Mammary epithelial cell (primary cell): ENCODE measurements at regions of chr2 and their contacts with region 1.

Region 1: DNA sequence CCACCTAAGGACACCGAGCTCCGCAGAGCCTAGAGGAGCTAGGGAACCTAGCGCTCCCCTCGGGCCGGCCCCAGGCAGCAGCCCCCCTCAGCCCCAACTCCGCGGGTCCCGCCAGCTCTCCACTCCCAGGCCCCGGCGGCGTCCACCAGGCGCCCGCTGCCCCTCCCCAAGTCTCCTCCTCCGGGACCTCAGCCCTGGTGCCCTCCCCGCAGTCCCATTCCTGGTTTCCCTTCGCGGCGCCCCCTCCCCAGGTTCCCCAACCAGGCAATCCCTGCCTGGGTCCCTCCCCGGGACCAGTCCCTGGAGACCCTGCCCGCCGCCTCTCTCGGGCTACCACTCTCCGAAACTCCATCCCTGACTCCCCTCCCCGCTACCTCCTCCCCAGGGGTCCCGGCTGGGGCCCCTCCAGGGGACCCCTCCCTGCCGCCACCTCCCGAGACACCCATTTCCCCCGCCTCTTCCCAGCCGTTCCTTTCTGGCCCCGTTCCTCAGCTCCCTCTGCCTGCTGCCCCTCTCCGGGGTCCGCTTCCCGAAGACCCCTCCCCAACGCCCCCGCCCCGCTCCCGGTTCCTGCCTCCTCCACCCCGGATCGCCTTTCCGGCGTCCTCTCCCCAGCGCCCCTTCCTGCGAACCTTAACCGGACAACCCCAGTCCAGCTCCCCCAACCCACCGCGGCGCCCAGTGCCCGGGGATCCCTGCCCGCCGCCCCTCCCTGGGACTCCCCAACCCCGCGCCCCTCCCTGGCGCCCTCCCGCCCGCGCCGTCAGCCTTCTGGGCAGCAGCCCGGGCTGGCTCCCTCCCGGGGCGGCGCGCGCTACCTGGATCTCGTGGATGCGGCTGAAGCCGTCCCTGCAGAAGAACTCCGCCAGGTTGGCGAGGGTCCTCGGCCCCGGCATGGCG is 678 bp downstream of the CYP27C1 start:
- DNase-seq: no peak
- H3K4me3 ChIP-seq: peak overlapping the region; percentile 70 to 92 (median 78)
- H3K27ac ChIP-seq: peak overlapping the region; percentile 93
- H3K4me1 ChIP-seq: peaks cover 42% of the 10 kb centered on the region
- H3K27me3 ChIP-seq: no peaks in the 10 kb centered on the region
- CTCF ChIP-seq: no peak

Region 2: GRCh38 chr2:127014630-127015029 is 204.8 kb before region 1 on chr2:
- CTCF ChIA-PET with region 1: no interaction called
- dilution Hi-C with region 1: no loop called
- in situ Hi-C with region 1: no loop called
- intact Hi-C with region 1: loop called (anchors 5 kb)
- DNase-seq: peak; percentile 94
- H3K4me3 ChIP-seq: no peak overlapping the region
- H3K27ac ChIP-seq: peak overlapping the region; percentile 71
- H3K4me1 ChIP-seq: peaks cover 22% of the 10 kb centered on the region
- H3K27me3 ChIP-seq: no peaks in the 10 kb centered on the region
- CTCF ChIP-seq: no peak

Region 3: DNA sequence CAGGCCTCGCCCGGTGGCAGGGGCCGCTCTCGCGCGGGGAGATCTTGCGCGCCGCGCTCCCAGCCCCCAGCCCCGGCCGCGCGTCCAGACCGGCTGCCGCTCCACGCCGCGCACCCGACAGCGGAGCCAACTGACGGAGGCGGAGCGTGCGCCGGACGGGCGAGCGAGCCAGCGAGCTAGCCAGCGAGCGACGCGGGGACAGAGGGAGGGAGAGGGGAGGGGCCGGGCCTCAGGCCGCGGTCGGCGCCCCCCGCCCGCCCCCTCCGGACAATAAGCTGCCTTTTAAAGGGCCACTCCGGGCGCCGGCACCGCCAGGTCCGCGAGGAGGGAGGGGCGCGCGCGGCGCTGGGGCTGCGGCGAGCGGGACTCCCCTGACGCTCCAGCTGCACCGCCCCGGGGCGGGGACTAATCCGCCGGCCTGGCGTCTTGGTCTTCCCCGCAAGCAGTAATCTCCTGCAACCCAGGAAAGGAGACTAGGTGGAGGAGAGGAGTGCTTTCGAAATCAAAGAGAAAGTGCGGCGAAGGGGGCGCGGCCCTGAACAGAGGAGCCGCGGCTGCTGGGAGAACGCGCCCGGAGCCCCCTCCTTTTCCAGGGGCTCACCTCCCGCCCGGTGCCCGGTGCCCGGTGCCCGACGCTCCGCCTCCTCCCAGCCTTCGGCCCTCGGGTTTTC is 112.3 kb before region 1 on chr2 and contains the start of gene BIN1:
- CTCF ChIA-PET with region 1: no interaction called
- dilution Hi-C with region 1: no loop called
- in situ Hi-C with region 1: no loop called
- intact Hi-C with region 1: loop called (anchors 5 kb)
- DNase-seq: peak; percentile 82
- H3K4me3 ChIP-seq: peak within 1 kb of the TSS; percentile 57 to 60 (median 59)
- H3K27ac ChIP-seq: no peak within 1 kb of the TSS
- H3K4me1 ChIP-seq: peaks cover 16% of the 10 kb centered on the region
- H3K27me3 ChIP-seq: peaks cover 4% of the 10 kb centered on the region
- CTCF ChIP-seq: no peak
- total RNA-seq, gene BIN1: 5.1 to 7.3 TPM

Region 4: DNA sequence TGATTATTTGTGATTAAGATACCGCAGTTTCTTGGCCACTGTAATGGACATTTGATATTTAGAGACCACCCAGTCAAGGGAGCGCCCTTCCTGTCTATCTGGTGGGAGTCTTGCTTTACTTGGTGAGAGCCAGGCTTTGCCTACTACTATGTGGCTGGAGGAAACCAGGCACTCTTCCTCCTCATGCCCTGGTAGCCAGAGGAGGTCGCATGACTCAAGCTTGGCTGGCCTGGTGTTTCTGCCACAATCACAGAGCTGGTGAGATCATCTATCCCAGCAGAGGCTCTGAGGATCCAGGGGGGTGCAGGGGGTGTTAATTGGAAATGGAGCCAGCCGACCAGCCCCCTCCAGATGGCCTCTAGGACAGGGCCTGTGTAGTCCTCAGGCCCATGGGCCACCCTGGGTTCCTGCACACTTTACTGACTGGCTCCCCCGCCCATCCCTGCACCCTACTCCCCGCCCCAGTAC is 65.7 kb before region 1 on chr2:
- CTCF ChIA-PET with region 1: no interaction called
- dilution Hi-C with region 1: no loop called
- in situ Hi-C with region 1: no loop called
- intact Hi-C with region 1: loop called (anchors 5 kb)
- DNase-seq: peak; percentile 77
- H3K4me3 ChIP-seq: no peak overlapping the region
- H3K27ac ChIP-seq: no peak overlapping the region
- H3K4me1 ChIP-seq: peaks cover 13% of the 10 kb centered on the region
- H3K27me3 ChIP-seq: no peaks in the 10 kb centered on the region
- CTCF ChIP-seq: no peak

Region 5: DNA sequence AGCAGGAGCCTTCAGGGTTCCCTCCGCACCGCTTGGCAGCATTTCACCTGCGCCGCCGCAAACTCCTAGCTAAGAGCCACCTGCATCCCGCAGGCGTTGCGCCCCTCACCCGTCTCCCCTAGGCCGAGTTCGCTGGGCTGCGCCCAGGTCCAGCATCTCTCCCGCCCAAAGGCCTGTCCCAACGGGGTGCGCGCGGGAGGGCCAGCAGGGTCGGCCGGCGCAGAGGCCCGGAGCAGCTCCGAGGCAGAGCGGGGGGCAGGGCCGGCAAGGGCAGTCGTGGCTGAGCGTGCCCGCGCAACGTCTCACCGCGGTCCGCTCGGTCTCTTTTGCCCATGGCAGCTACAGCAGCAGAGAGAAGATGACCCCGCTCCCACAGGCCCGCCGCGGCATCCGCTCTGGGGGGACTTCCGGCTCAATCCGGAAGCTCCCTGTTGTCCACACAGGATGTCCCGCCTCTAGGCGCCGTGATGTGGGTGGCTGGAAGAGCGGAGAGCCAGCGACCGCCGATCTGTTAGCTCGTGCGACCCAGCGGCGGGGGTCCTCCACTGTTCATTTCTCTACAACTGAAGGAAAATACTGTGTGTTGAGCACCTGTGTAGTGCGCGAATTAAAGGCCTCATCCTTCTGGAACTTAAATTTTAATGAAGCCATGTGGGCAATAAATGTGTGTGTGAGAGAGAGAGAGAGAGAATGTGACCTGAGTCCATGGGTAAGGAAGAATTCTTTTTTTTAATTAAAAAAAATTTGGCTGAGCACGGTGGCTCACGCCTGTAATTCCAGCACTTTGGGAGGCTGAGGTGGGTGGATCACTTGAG is 74.5 kb after region 1 on chr2 and contains the start of gene ERCC3:
- CTCF ChIA-PET with region 1: no interaction called
- dilution Hi-C with region 1: no loop called
- in situ Hi-C with region 1: no loop called
- intact Hi-C with region 1: loop called (anchors 5 kb)
- DNase-seq: peak; percentile 66
- H3K4me3 ChIP-seq: peak within 1 kb of the TSS; percentile 75 to 87 (median 83)
- H3K27ac ChIP-seq: peak within 1 kb of the TSS; percentile 69
- H3K4me1 ChIP-seq: no peaks in the 10 kb centered on the region
- H3K27me3 ChIP-seq: no peaks in the 10 kb centered on the region
- CTCF ChIP-seq: no peak
- total RNA-seq, gene ERCC3: 34.7 to 40.0 TPM